Motor neuron (in vitro differentiated cells): ENCODE measurements at regions of chr3 and their contacts with region 1.

Region 1: DNA sequence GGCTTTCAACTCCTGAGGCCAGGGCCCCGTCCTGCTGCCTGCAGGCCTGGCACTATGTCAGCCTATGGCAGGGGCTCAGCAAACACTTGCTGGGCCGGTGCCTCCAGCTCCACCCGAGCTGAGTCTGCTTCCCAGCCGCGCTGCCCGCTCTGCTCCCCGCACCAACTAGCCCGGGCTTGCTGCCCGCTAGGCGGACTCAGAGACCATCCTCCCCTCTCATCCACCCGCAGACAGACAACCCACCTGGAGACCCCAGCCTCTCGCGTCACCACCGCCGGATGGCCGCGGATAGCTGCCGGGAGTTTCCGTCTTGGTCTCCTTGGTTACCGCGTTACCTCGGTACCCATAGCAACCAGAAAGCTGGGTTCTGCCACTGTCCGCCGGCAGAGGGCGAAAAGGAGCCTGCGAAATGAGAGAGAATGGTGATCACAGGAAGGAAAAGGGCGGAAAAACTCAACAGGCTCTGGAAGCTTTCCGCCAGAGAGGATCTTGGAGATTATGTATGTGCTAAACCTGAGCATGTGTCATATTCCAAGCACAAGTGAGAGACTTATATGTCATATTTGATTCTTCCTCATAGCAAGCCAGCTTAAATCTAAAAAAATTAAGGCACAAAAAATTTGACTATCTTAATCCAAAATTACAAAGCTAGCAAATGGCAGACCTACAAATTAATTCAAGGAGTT is at the start of gene ZBBX:
- ATAC-seq: peak; percentile 97 to 100 (median 98)
- H3K4me3 ChIP-seq: peak within 1 kb of the TSS; percentile 35 to 55 (median 38)
- H3K27ac ChIP-seq: no peak within 1 kb of the TSS
- H3K4me1 ChIP-seq: no peaks in the 10 kb centered on the region
- total RNA-seq, gene ZBBX: 0.10 to 32.7 (median 3.5) TPM

Region 2: GRCh38 chr3:167209021-167209420 is 171.1 kb before region 1 on chr3:
- in situ Hi-C with region 1: no loop called
- ATAC-seq: no peak
- H3K4me3 ChIP-seq: no peak overlapping the region
- H3K27ac ChIP-seq: no peak overlapping the region
- H3K4me1 ChIP-seq: no peaks in the 10 kb centered on the region

Region 3: GRCh38 chr3:167684388-167684993 is 304.3 kb after region 1 on chr3:
- in situ Hi-C with region 1: loop called in 1 of 9 experiments (anchors 25 kb)
- ATAC-seq: peak in 4 of 8 experiments; percentile 36 to 68 (median 58)
- H3K4me3 ChIP-seq: no peak overlapping the region
- H3K27ac ChIP-seq: no peak overlapping the region
- H3K4me1 ChIP-seq: no peaks in the 10 kb centered on the region